ENCODE measurements at regions of chr5 and their contacts with region 1.

Region 1: GRCh38 chr5:166581826-166582225 is 1709.6 kb upstream of the WWC1 start:
- DNase-seq: no peak
- ATAC-seq: no peak
- H3K4me3 ChIP-seq: no peak overlapping the region
- H3K4me3 Mint-ChIP-seq: no peak overlapping the region
- H3K27ac ChIP-seq: no peak overlapping the region
- H3K27ac Mint-ChIP-seq: no peak overlapping the region
- H3K4me1 ChIP-seq: no peaks in the 10 kb centered on the region
- H3K4me1 Mint-ChIP-seq: no peaks in the 10 kb centered on the region
- H3K27me3 ChIP-seq: no peaks in the 10 kb centered on the region
- H3K27me3 Mint-ChIP-seq: no peaks in the 10 kb centered on the region

Region 2: DNA sequence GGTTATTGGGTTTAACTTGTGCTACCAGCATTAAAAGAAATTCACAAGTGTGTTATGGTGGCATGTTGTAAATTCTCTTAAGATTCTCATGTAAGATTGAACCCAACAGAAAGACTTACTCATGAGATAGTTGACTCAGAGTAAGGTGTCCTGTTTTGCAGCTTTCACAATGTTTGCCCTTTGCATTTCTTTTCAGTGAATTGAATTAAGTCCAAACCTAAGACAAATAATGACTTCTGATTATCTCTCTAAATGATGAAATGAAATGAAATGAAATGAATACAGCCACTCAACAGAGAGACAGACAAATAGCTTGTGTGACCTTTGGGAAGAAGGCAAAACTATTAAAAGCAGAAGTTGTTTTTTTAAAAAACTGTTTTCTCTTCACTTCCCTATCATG is 12.8 kb after region 1 on chr5:
- CTCF ChIA-PET with region 1: no interaction called
- POLR2A ChIA-PET with region 1: no interaction called
- intact Hi-C with region 1: no loop called
- DNase-seq: no peak
- ATAC-seq: no peak
- H3K4me3 ChIP-seq: no peak overlapping the region
- H3K4me3 Mint-ChIP-seq: no peak overlapping the region
- H3K27ac ChIP-seq: no peak overlapping the region
- H3K27ac Mint-ChIP-seq: no peak overlapping the region
- H3K4me1 ChIP-seq: no peaks in the 10 kb centered on the region
- H3K4me1 Mint-ChIP-seq: no peaks in the 10 kb centered on the region
- H3K27me3 ChIP-seq: no peaks in the 10 kb centered on the region
- H3K27me3 Mint-ChIP-seq: no peaks in the 10 kb centered on the region

Region 3: GRCh38 chr5:166625210-166625865 is 43.5 kb after region 1 on chr5:
- CTCF ChIA-PET with region 1: no interaction called
- POLR2A ChIA-PET with region 1: no interaction called
- intact Hi-C with region 1: loop called in 1 of 2 experiments (anchors 2 kb)
- DNase-seq: no peak
- ATAC-seq: no peak
- H3K4me3 ChIP-seq: no peak overlapping the region
- H3K4me3 Mint-ChIP-seq: no peak overlapping the region
- H3K27ac ChIP-seq: no peak overlapping the region
- H3K27ac Mint-ChIP-seq: no peak overlapping the region
- H3K4me1 ChIP-seq: no peaks in the 10 kb centered on the region
- H3K4me1 Mint-ChIP-seq: no peaks in the 10 kb centered on the region
- H3K27me3 ChIP-seq: no peaks in the 10 kb centered on the region
- H3K27me3 Mint-ChIP-seq: no peaks in the 10 kb centered on the region